ENCODE measurements at regions of chr14 and their contacts with region 1.

Region 1: GRCh38 chr14:89973234-89973823 is 17.6 kb downstream of the TDP1 start:
- DNase-seq: peak; percentile 27
- H3K4me3 ChIP-seq: no peak overlapping the region
- H3K27ac ChIP-seq: no peak overlapping the region
- H3K27me3 ChIP-seq: no peaks in the 10 kb centered on the region
- CTCF ChIP-seq: peak; percentile 92

Region 2: DNA sequence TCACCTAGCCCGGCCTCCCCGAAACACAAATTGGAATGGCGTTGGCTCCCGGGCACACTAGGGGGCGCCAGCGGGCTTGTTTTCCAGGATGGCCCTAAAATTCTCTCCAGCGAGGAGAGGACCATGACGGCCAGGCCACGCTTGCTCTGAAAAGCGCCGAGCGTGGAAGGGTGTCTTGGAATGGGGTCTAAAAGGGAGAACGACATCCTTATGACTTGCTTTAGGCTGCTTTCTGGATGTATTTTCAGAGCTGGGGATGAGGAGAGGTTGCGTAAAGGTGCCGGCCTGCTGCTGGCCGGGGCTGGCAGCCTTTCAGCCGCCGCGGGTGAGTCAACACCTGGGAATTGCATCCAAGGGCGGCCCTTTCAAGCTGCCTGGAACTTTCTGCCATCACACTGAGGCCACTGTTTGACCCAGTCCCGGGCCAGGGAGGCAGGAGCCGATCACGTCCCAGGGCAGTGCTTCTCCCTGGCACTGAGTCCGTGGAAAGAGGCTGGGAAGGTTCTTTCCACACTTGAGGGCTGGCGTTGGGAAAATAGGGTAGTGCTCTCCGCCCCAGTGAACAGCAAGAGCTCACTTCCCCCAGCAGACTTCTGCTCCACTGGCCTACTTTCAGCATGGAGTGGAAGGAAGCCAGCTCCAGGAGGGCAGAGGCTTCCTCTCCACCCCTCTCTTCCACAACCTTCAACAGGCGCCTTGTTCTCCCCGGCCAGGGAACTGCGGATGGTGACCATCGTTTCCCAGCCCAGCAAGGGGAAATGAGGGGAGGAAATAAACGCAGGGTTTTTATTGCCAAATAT is 932.7 kb before region 1 on chr14:
- CTCF ChIA-PET with region 1: interaction called, 10 read pairs
- POLR2A ChIA-PET with region 1: no interaction called
- DNase-seq: peak; percentile 68
- H3K4me3 ChIP-seq: peak overlapping the region; percentile 64
- H3K27ac ChIP-seq: peak overlapping the region; percentile 94
- H3K27me3 ChIP-seq: peaks cover 2% of the 10 kb centered on the region
- CTCF ChIP-seq: peak; percentile 99

Region 3: GRCh38 chr14:89959853-89960445 is 13.4 kb before region 1 on chr14:
- CTCF ChIA-PET with region 1: interaction called, 87 read pairs
- POLR2A ChIA-PET with region 1: no interaction called
- DNase-seq: no peak
- H3K4me3 ChIP-seq: no peak overlapping the region
- H3K27ac ChIP-seq: no peak overlapping the region
- H3K27me3 ChIP-seq: no peaks in the 10 kb centered on the region
- CTCF ChIP-seq: no peak

Region 4: DNA sequence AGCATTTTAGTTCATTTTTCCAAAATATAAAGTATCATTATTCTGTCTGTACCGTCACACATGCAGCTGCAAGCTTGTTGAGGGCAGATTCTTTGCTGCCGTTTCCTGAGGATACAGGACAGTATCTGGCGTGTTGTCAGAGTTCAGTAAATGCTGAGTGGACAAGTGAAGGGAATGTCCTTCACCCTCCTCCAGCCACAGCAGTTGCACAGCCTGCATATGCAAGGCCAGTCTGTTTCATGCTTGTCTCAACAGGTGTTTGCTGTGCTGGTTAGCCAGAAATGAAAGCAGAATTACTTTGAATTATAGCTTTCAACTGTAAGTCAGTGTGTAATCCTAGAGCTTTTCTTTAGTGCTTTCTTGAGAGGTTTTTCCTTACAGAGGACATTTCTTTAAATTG is 18.9 kb after region 1 on chr14:
- CTCF ChIA-PET with region 1: interaction called, 66 read pairs
- POLR2A ChIA-PET with region 1: no interaction called
- DNase-seq: no peak
- H3K4me3 ChIP-seq: no peak overlapping the region
- H3K27ac ChIP-seq: no peak overlapping the region
- H3K27me3 ChIP-seq: no peaks in the 10 kb centered on the region
- CTCF ChIP-seq: no peak

Region 5: DNA sequence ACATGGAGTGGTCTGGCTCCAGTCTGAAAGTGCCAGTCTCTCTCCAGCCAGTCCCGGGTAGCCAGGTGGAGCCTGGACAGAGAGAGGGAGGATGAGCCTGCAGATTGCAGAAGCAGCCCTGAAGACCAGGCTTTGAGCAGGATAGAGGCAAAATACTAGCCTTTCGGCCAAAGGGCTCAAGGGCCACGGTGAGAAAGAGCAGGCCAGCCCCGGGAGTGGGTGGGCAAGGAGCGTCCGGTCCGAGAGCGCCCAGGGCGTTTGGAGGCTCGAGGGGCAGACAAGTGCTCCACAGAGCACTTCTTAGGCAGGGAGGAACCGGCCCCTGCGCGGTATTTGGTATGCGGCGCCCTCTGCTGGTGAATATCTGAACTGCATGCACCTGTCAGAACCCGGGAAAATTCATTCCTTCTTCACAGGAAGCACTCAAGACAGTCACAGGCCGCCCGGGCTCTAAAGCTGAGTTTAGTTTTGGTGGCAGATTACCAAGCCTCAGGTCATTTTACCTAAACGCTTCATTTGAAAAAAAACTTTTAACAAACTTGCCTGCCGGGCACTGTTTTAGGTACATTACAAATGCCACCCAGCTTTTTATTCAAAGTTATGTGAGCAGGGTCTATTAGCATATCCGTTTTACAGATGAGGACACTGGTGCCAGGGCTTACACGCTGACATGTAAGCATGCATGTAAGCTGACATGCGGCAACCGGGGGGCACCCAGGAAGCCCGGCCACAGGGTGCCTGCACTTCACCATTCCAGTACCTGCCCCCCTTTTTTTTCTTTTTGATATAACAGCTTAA is 262.0 kb after region 1 on chr14:
- CTCF ChIA-PET with region 1: interaction called, 101 read pairs
- POLR2A ChIA-PET with region 1: no interaction called
- DNase-seq: peak; percentile 3
- H3K4me3 ChIP-seq: no peak overlapping the region
- H3K27ac ChIP-seq: no peak overlapping the region
- H3K27me3 ChIP-seq: peaks cover 4% of the 10 kb centered on the region
- CTCF ChIP-seq: peak; percentile 81